Left ventricle myocardium inferior (tissue), 1 donor: ENCODE measurements at regions of chr20 and their contacts with region 1.

Region 1: DNA sequence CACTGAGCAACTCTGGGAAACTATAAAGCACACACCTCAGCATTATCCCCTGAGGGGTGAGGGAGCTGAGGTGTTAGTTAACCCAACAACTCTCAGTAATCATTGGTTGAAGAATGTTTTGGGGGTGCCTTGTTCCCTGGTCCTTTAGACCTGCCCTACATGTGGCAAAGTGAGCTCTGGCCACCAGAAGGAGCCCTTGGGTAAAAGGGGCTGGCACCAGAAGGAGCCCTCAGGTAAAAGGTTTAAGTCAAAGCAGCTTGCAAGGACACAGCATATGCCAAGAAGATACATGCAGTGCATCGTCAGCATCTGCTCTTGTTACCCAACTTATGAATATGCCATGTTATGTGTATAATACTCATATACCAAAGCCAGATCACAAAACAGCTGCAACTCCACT is 1081.7 kb downstream of the KIF16B start:
- DNase-seq: no peak
- H3K4me3 ChIP-seq: no peak overlapping the region
- H3K27ac ChIP-seq: no peak overlapping the region
- H3K4me1 ChIP-seq: peaks cover 9% of the 10 kb centered on the region
- H3K27me3 ChIP-seq: no peaks in the 10 kb centered on the region
- CTCF ChIP-seq: no peak

Region 2: DNA sequence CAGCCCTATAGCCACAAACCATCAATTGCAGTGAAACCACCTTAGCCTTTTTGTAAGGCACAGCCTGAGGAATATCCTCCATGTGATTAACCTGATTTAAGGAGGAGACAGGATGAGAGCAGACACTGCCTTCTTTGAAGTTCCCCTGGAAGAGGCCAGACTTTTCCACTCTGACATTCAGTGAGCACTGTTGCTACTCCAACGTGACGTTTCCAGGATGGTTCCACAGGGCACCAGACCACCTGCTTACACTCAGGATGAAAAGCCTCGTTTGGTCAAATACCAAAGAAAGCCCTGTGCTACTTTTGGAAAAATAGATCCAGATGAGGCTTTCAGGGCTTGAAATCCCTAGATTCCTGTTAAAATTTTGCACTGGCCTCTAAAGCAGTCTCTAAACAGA is 52.0 kb before region 1 on chr20:
- intact Hi-C with region 1: loop called (anchors 10 kb)
- DNase-seq: no peak
- H3K4me3 ChIP-seq: no peak overlapping the region
- H3K27ac ChIP-seq: no peak overlapping the region
- H3K4me1 ChIP-seq: peaks cover 8% of the 10 kb centered on the region
- H3K27me3 ChIP-seq: no peaks in the 10 kb centered on the region
- CTCF ChIP-seq: no peak